Heart right ventricle (tissue), 16 donors: ENCODE measurements at regions of chr16 and their contacts with region 1.

Region 1: DNA sequence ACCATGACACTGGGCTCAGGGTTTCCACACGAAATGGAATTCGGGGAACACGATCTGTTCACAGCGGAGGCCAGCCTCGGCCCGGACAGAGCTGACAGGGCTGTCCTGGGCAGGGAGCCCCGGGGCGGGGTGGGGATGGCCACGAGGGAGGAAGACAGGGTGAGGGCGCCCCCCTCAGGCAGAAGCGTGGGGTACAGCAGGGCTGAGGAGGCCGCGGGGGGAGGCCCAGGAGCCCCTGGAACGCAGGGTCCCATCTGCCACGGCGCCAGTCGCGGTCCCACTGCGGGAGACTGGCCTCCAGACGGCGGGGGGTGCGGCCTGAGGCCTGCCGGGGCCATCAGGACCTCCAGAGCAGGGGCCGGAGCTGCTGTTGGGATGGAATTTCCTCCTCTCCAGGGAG is 75.9 kb downstream of the LMF1 start:
- DNase-seq: no peak
- ATAC-seq: no peak
- H3K4me3 ChIP-seq: no peak overlapping the region
- H3K27ac ChIP-seq: no peak overlapping the region
- H3K4me1 ChIP-seq: peaks cover 0 to 11% (median 8%) of the 10 kb centered on the region in 9 donors
- H3K27me3 ChIP-seq: no peaks in the 10 kb centered on the region
- CTCF ChIP-seq: peak in 1 of 9 donors; percentile 8

Region 2: GRCh38 chr16:740764-741505 is 153.9 kb before region 1 on chr16 and contains the start of gene CIAO3:
- intact Hi-C with region 1: no loop called
- DNase-seq: peak; percentile 87 to 91
- ATAC-seq: peak; percentile 91 to 96 (median 92)
- H3K4me3 ChIP-seq: peak within 1 kb of the TSS; percentile 68 to 100 (median 94)
- H3K27ac ChIP-seq: peak within 1 kb of the TSS in 9 of 10 donors; percentile 44 to 90 (median 82)
- H3K4me1 ChIP-seq: peaks cover 7 to 19% (median 15%) of the 10 kb centered on the region in 9 donors
- H3K27me3 ChIP-seq: peaks cover 0 to 18% (median 4%) of the 10 kb centered on the region in 7 donors
- CTCF ChIP-seq: peak; percentile 88 to 99 (median 97)
- total RNA-seq, gene CIAO3: 18.7 to 33.0 (median 24.1) TPM

Region 3: DNA sequence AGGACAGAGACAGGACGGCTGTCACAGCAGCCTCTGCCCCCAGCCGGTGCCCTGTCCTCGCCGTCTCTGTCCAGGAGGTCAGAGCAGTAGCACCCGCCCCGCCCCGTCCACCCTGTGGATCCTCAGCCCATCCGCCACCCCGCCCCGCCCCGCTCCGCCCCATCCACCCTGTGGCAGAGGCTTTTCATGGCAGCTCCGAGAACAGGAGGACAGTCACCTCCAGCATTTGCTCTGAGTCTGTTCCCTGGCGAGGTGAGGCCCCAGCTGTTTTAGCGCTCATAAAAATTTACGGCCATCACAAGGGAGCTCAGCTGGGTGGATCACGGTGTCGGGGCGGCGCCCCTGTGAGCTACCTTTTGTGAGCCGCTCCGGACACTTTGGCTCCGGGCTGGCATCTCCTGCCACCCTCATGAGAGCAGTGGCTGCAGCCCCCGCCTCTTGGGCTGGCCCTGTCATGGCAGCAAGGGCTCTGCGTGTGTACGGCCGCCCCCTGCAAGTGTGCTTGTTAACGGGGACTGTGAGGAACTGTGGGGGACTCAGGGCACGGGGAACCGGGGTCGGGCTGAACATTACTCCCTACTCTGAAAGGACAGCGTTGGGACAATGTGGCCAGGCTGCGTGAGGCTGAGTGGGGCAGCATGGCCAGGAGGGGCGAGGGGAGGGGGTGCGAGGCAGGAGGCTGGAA is 62.0 kb before region 1 on chr16:
- intact Hi-C with region 1: no loop called
- DNase-seq: no peak
- ATAC-seq: no peak
- H3K4me3 ChIP-seq: no peak overlapping the region
- H3K27ac ChIP-seq: no peak overlapping the region
- H3K4me1 ChIP-seq: no peaks in the 10 kb centered on the region
- H3K27me3 ChIP-seq: peaks cover 0 to 9% (median 0%) of the 10 kb centered on the region in 7 donors
- CTCF ChIP-seq: no peak

Region 4: GRCh38 chr16:938136-938795 is 43.4 kb after region 1 on chr16:
- intact Hi-C with region 1: no loop called
- DNase-seq: no peak
- ATAC-seq: no peak
- H3K4me3 ChIP-seq: no peak overlapping the region
- H3K27ac ChIP-seq: no peak overlapping the region
- H3K4me1 ChIP-seq: no peaks in the 10 kb centered on the region
- H3K27me3 ChIP-seq: no peaks in the 10 kb centered on the region
- CTCF ChIP-seq: no peak

Region 5: GRCh38 chr16:951660-952301 is 56.9 kb after region 1 on chr16:
- intact Hi-C with region 1: loop called in 1 of 10 experiments (anchors 10 kb)
- DNase-seq: no peak
- ATAC-seq: peak in 2 of 8 donors; percentile 22 to 30
- H3K4me3 ChIP-seq: no peak overlapping the region
- H3K27ac ChIP-seq: no peak overlapping the region
- H3K4me1 ChIP-seq: no peaks in the 10 kb centered on the region
- H3K27me3 ChIP-seq: no peaks in the 10 kb centered on the region
- CTCF ChIP-seq: no peak

Region 6: GRCh38 chr16:1002399-1003161 is 107.7 kb after region 1 on chr16:
- intact Hi-C with region 1: loop called in 1 of 10 experiments (anchors 10 kb)
- DNase-seq: no peak
- ATAC-seq: peak in 2 of 8 donors; percentile 39 to 53
- H3K4me3 ChIP-seq: no peak overlapping the region
- H3K27ac ChIP-seq: no peak overlapping the region
- H3K4me1 ChIP-seq: peaks cover 0 to 22% (median 7%) of the 10 kb centered on the region in 9 donors
- H3K27me3 ChIP-seq: peaks cover 0 to 37% (median 15%) of the 10 kb centered on the region in 7 donors
- CTCF ChIP-seq: no peak

Region 7: GRCh38 chr16:1069154-1069553 is 174.3 kb after region 1 on chr16:
- intact Hi-C with region 1: no loop called
- DNase-seq: no peak
- ATAC-seq: no peak
- H3K4me3 ChIP-seq: no peak overlapping the region
- H3K27ac ChIP-seq: no peak overlapping the region
- H3K4me1 ChIP-seq: peaks cover 0 to 7% (median 0%) of the 10 kb centered on the region in 9 donors
- H3K27me3 ChIP-seq: peaks cover 19 to 99% (median 97%) of the 10 kb centered on the region in 7 donors
- CTCF ChIP-seq: no peak